ENCODE measurements at regions of chr14 and their contacts with region 1.

Region 1: GRCh38 chr14:33792720-33793368 is 158.0 kb downstream of the EGLN3 start:
- DNase-seq: peak; percentile 15
- ATAC-seq: peak; percentile 91
- H3K4me3 ChIP-seq: no peak overlapping the region
- H3K27ac ChIP-seq: no peak overlapping the region
- H3K4me1 ChIP-seq: no peaks in the 10 kb centered on the region
- H3K27me3 ChIP-seq: no peaks in the 10 kb centered on the region
- CTCF ChIP-seq: peak; percentile 91 to 95 (median 93); a peak in 5 of 6 replicates
- EP300 ChIP-seq: no peak
- POLR2A ChIP-seq: no peak
- RAD21 ChIP-seq: peak; percentile 86

Region 2: DNA sequence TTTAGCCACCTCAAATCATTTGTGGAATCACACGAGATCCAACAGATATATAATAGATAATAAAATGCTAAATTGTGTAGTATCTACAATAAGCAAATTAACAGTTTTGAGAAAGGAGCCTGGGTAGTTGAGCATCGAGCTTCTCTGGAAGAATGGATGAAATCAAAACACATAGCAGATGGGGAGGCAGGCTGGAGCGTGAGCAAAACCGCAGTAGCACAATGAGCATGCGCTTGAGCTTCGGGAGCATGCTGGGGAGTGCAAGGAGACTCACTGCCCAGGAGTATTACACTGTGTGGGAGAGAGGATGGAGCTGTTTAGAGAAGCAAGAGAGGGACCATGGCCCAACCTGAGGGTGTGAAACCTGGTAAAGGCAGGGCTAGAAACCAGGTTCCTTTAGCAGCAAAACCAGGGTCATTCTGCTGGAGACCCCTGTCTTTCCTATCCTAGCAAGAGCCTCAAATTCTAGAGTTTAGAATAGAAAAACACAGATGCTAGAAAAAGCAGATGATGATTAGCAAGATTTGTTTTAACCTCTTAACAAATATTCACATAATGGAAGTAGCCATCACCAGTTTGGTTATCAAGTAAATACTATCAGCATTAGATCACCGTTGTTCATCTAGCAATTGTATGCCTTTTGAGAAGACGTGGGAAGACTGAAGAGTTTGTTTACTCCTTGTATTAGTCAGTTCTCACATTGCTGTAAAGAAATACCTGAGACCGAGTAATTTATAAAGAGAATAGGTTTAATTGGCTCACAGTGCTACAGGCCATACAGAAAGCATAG is 326.8 kb before region 1 on chr14:
- CTCF ChIA-PET with region 1: interaction called, 3 read pairs
- POLR2A ChIA-PET with region 1: no interaction called
- RAD21 ChIA-PET with region 1: interaction called, 9 read pairs
- SMC1A ChIA-PET with region 1: interaction called, 4 read pairs
- in situ Hi-C with region 1: loop called (anchors 5 kb)
- intact Hi-C with region 1: no loop called
- DNase-seq: no peak
- ATAC-seq: no peak
- H3K4me3 ChIP-seq: no peak overlapping the region
- H3K27ac ChIP-seq: no peak overlapping the region
- H3K4me1 ChIP-seq: no peaks in the 10 kb centered on the region
- H3K27me3 ChIP-seq: no peaks in the 10 kb centered on the region
- CTCF ChIP-seq: no peak
- EP300 ChIP-seq: no peak
- POLR2A ChIP-seq: no peak
- RAD21 ChIP-seq: no peak

Region 3: DNA sequence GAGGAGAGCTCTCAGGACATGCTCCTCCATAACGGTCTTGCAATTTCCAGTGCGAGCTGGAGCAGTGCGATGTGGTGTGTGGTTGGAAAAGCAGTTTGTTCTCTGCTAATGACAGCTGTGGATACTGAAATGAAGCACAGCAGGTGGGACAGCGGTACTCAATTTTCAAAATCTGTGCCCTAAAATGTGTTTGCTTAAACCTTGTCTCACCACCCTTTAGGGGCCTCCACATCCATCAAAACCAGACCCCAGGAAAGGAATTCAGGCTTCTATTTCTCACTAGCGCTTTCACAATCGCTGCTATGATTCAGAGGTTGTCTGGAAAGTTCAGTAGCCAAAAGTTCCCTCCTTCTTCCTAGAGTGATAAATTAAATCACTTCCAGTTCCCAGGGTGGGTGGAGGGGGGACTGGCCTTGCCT is 282.8 kb before region 1 on chr14:
- CTCF ChIA-PET with region 1: interaction called, 52 read pairs
- POLR2A ChIA-PET with region 1: interaction called, 9 read pairs
- RAD21 ChIA-PET with region 1: interaction called, 74 read pairs
- SMC1A ChIA-PET with region 1: interaction called, 73 read pairs
- in situ Hi-C with region 1: no loop called
- intact Hi-C with region 1: no loop called
- DNase-seq: no peak
- ATAC-seq: no peak
- H3K4me3 ChIP-seq: no peak overlapping the region
- H3K27ac ChIP-seq: no peak overlapping the region
- H3K4me1 ChIP-seq: no peaks in the 10 kb centered on the region
- H3K27me3 ChIP-seq: peaks cover 0 to 2% of the 10 kb centered on the region in 2 experiments; a peak in 2 of 4 replicates
- CTCF ChIP-seq: no peak
- EP300 ChIP-seq: no peak
- POLR2A ChIP-seq: no peak
- RAD21 ChIP-seq: no peak

Region 4: GRCh38 chr14:33596211-33597080 is 196.4 kb before region 1 on chr14:
- CTCF ChIA-PET with region 1: interaction called, 10 read pairs
- POLR2A ChIA-PET with region 1: no interaction called
- RAD21 ChIA-PET with region 1: interaction called, 3 read pairs
- SMC1A ChIA-PET with region 1: interaction called, 3 read pairs
- in situ Hi-C with region 1: no loop called
- intact Hi-C with region 1: no loop called
- DNase-seq: no peak
- ATAC-seq: no peak
- H3K4me3 ChIP-seq: no peak overlapping the region
- H3K27ac ChIP-seq: no peak overlapping the region
- H3K4me1 ChIP-seq: no peaks in the 10 kb centered on the region
- H3K27me3 ChIP-seq: no peaks in the 10 kb centered on the region; a peak in 1 of 4 replicates
- CTCF ChIP-seq: no peak
- EP300 ChIP-seq: no peak
- POLR2A ChIP-seq: no peak
- RAD21 ChIP-seq: no peak

Region 5: DNA sequence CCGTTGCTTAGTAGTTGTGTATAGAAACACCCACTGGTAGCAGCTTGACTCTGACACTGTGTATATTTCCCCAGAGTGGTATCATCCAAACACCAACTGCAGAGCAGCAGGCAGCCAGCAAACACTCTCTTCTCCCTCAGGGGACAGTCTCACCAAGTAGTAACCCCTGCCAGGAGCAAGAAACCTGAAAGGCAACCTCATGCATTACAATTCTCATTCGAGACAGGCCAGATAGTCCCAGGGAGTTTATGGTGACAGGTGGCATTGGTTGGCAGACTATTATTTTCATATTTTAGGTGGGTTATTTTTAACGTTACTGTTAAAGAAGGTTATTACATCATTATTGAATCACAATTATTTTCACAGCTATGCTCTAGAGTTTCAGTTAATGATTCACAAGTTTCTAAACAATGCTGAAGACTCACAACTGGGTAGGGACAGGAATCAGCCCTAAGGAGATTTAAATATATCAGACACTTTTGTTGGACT is 64.8 kb before region 1 on chr14:
- CTCF ChIA-PET with region 1: interaction called, 14 read pairs
- POLR2A ChIA-PET with region 1: interaction called, 5 read pairs
- RAD21 ChIA-PET with region 1: interaction called, 19 read pairs
- SMC1A ChIA-PET with region 1: interaction called, 48 read pairs
- in situ Hi-C with region 1: no loop called
- intact Hi-C with region 1: no loop called
- DNase-seq: no peak
- ATAC-seq: peak; percentile 72
- H3K4me3 ChIP-seq: no peak overlapping the region
- H3K27ac ChIP-seq: no peak overlapping the region
- H3K4me1 ChIP-seq: no peaks in the 10 kb centered on the region
- H3K27me3 ChIP-seq: no peaks in the 10 kb centered on the region; a peak in 1 of 4 replicates
- CTCF ChIP-seq: no peak
- EP300 ChIP-seq: no peak
- POLR2A ChIP-seq: no peak
- RAD21 ChIP-seq: no peak

Region 6: DNA sequence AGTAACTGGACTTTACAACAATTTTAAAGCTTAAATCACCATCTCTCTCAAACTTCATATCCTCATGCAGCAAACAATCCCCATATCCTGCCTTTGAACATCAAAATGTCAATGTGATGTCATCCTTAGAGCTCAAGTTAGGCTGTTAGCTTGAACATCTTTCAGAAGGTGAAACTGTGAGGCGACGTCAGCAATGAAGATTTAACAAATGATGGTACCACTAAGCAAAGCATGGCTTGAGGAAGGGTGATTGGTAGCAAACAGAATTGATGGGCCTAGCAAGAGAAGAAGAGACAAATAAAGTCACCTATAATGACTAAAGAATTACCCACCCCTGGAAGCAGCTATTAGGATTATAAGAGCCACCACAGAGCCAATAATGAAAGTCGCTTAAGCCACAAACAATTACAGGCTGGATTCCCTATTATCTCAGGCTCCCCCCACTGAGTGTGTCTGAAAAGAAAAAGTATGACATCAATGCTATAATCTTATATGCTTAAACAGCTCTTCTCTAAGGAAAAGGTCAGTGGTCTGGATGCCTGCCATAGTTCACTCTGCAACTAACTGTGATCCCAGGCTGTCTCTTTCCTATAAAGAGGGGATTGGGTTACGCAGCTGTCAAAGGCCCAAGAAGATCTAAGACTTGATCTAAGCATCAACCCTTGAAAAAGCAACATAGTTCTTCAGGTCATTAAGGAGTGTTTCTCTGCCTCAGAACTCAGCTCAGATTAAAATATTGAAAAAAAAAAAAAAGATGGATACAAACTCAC is 139.9 kb after region 1 on chr14:
- CTCF ChIA-PET with region 1: no interaction called
- POLR2A ChIA-PET with region 1: no interaction called
- RAD21 ChIA-PET with region 1: no interaction called
- SMC1A ChIA-PET with region 1: no interaction called
- in situ Hi-C with region 1: no loop called
- intact Hi-C with region 1: no loop called
- DNase-seq: no peak
- ATAC-seq: no peak
- H3K4me3 ChIP-seq: no peak overlapping the region
- H3K27ac ChIP-seq: no peak overlapping the region
- H3K4me1 ChIP-seq: no peaks in the 10 kb centered on the region
- H3K27me3 ChIP-seq: no peaks in the 10 kb centered on the region
- CTCF ChIP-seq: no peak
- EP300 ChIP-seq: no peak
- POLR2A ChIP-seq: no peak
- RAD21 ChIP-seq: no peak